Activated naive CD4-positive, alpha-beta T cell treated with anti-CD3 and anti-CD28 coated beads, Interleukin-2, amount 10 ng/mL, durations not matched to agents 7 days and 5 days (primary cell): ENCODE measurements at regions of chr2 and their contacts with region 1.

Region 1: GRCh38 chr2:240972636-240973521 is 25.5 kb upstream of the SNED1 start:
- DNase-seq: no peak
- H3K4me3 Mint-ChIP-seq: no peak overlapping the region
- H3K27ac Mint-ChIP-seq: no peak overlapping the region
- H3K4me1 Mint-ChIP-seq: peaks cover 21% of the 10 kb centered on the region
- H3K27me3 Mint-ChIP-seq: peaks cover 40% of the 10 kb centered on the region

Region 2: GRCh38 chr2:240983361-240983995 is 10.6 kb after region 1 on chr2:
- CTCF ChIA-PET with region 1: interaction called, 10 read pairs
- DNase-seq: peak; percentile 60
- H3K4me3 Mint-ChIP-seq: no peak overlapping the region
- H3K27ac Mint-ChIP-seq: no peak overlapping the region
- H3K4me1 Mint-ChIP-seq: no peaks in the 10 kb centered on the region
- H3K27me3 Mint-ChIP-seq: peaks cover 43% of the 10 kb centered on the region

Region 3: GRCh38 chr2:241257417-241258032 is 284.6 kb after region 1 on chr2:
- CTCF ChIA-PET with region 1: no interaction called
- DNase-seq: no peak
- H3K4me3 Mint-ChIP-seq: no peak overlapping the region
- H3K27ac Mint-ChIP-seq: no peak overlapping the region
- H3K4me1 Mint-ChIP-seq: no peaks in the 10 kb centered on the region
- H3K27me3 Mint-ChIP-seq: no peaks in the 10 kb centered on the region